ENCODE measurements at regions of chr16 and their contacts with region 1.

Region 1: DNA sequence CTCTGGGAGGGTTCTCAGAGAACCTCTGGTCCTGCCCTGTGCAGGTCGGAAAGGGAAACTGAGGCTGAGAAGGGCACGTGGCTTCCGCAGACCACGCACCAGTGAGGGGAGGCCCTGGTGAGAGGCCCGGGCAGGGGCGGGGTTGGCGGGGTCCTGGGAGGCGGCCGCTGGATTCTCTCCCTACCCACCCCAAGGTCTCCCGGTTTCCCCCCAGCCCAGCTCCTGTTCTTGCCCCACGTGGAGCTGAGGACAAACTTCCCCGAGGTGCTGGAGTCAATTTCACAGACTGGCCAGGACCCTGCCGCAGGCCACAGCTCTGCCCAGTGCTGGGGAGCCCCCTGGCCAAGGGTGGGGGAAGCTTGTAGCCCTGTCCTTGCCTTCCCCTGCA is 11.5 kb downstream of the CCL17 start:
- DNase-seq: no peak
- H3K4me3 ChIP-seq: no peak overlapping the region
- H3K27ac ChIP-seq: peak overlapping the region in 1 of 2 donors; percentile 74
- H3K4me1 ChIP-seq: no peaks in the 10 kb centered on the region
- H3K27me3 ChIP-seq: no peaks in the 10 kb centered on the region
- CTCF ChIP-seq: no peak
- POLR2A ChIP-seq: no peak

Region 2: DNA sequence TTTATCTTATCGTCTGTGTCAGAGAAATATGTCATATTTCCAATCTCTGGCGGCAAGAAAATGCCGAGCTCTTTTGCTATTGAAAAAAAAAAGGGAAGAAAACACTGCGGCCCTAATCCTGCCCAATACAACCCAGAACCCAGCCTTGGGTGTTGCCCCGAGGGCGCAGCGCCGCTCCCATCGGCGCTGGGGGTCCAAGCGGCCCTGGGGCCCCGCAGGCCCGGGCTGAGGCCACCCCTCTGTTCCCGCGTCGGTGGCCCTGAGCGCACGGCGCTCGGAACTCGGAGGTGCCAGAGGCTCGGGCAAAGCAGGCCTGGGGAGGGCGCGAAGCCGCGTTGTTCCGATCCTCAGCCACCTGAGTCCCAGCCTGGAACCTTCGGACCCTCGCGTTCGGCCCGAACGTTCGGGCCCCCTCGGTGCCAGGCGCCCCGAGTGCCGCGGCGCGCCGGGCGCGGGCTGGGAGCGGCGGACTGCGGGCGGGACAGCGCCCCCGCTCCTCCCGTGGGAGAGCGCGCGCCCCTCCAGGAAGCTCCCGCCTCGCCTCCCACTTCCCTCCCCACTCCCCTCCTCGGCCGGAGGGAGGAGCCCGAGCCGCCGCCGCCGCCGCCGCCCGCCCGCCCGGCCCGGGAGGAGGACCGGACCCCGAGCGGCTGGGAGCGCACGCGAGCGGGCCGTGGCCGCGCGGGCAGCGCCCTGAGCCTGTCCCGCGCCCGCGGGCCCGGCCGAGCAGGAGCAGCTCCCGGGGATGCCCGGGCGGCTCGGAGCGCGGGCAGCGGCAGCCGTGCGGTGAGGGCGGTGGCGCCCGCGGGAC is 323.9 kb before region 1 on chr16 and contains the start of gene CPNE2:
- intact Hi-C with region 1: loop called (anchors 5 kb)
- DNase-seq: peak; percentile 65 to 76
- H3K4me3 ChIP-seq: peak within 1 kb of the TSS; percentile 39 to 67
- H3K27ac ChIP-seq: peak within 1 kb of the TSS; percentile 89 to 91
- H3K4me1 ChIP-seq: peaks cover 0 to 12% of the 10 kb centered on the region in 2 donors
- H3K27me3 ChIP-seq: no peaks in the 10 kb centered on the region
- CTCF ChIP-seq: peak in 3 of 4 experiments; percentile 12 to 30 (median 17)
- POLR2A ChIP-seq: peak; percentile 26 to 78
- total RNA-seq, gene CPNE2: 25.1 to 41.4 (median 40.6) TPM

Region 3: DNA sequence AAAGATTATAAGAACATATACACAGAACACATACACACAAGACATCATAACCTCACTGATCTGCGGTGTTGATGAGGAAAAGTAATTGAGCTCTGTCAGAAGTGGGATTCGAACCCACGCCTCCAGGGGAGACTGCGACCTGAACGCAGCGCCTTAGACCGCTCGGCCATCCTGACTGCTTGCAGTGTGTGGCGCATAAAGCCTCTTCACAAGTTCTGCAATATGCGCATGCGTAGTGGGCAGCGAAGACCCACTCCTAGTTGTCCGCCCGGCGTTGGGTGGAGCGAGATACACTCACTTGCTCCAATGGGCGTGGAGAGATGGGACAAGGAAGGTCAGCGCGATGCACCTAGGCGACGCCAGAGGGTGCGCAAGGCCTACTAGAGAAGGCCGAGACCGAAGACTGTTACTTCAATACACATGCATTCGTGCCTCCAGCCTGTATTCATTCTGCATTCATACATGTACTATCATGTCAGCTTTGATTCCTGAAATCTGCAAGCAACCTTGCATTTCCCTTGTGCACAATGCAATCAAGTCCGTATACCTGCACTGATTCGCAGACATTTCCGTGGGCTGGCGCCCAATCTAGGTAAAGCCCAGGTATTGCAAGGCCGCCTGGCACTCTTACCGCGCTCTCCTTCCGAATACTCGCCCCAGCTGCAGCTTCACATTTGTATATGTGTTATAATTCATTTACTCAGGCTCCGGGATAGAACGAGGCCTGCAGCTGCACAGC is 115.6 kb before region 1 on chr16:
- intact Hi-C with region 1: loop called (anchors 2 kb)
- DNase-seq: peak; percentile 99
- H3K4me3 ChIP-seq: peak overlapping the region; percentile 41 to 47
- H3K27ac ChIP-seq: peak overlapping the region; percentile 92 to 97
- H3K4me1 ChIP-seq: peaks cover 5 to 9% of the 10 kb centered on the region in 2 donors
- H3K27me3 ChIP-seq: no peaks in the 10 kb centered on the region
- CTCF ChIP-seq: peak; percentile 94 to 100 (median 98)
- POLR2A ChIP-seq: peak; percentile 34 to 47

Measured in uterus (tissue), 4 donors.